Activated CD8-positive, alpha-beta T cell treated with anti-CD3 and anti-CD28 coated beads for 36 hours (primary cell): ENCODE measurements at regions of chrX and their contacts with region 1.

Region 1: GRCh38 chrX:54639346-54640102 is 109.5 kb downstream of the GNL3L start:
- DNase-seq: peak; percentile 98
- ATAC-seq: peak; percentile 94
- H3K4me3 Mint-ChIP-seq: peak overlapping the region; percentile 78
- H3K27ac Mint-ChIP-seq: peak overlapping the region; percentile 97
- H3K4me1 Mint-ChIP-seq: peaks cover 9% of the 10 kb centered on the region
- H3K27me3 Mint-ChIP-seq: no peaks in the 10 kb centered on the region
- CTCF ChIP-seq: peak; percentile 39

Region 2: DNA sequence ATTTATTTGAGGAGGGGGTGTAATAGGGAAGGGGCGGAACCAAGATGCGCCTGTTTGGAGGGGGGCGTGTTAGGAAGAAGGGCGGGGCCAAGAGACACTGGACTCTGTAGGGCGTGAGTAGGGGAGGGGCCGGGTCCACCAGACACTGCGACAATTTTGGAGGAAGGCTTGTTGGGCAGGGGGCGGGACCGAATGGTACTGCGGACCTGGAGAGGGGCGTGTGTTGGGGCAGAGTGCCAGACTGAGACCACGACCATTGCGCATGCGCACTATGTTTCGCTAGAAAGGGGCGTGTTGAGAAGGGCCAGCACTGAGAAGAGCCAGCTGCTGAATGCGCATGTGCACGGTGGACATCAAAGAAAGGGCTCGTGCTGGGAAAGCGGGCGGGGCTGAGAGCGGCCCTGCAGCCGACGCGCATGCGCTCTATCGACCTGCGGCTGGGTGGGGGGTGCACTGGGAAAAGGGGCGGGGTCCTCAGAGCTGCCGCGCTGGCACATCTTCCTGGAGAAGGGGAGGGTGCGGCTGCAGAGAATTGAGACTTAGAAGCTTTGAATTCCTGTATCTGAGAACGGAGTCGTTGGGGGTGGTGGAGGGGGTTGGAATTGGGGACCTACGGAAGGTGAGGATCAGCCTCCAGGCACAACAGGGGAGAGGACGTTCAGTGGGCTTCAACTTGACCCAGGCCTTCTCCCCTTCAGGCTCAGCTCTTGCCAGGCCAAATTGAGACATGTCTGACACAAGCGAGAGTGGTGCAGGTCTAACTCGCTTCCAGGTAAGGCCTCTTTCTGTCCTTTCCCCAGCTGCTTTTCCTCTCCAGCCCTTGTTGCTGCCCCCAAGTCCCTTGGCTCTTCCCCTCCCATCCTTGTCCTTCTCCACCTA is 169.3 kb after region 1 on chrX:
- CTCF ChIA-PET with region 1: interaction called, 3 read pairs
- POLR2A ChIA-PET with region 1: interaction called, 11 read pairs
- intact Hi-C with region 1: no loop called
- DNase-seq: peak; percentile 93
- ATAC-seq: peak; percentile 92
- H3K4me3 Mint-ChIP-seq: peak overlapping the region; percentile 89
- H3K27ac Mint-ChIP-seq: peak overlapping the region; percentile 94
- H3K4me1 Mint-ChIP-seq: peaks cover 9% of the 10 kb centered on the region
- H3K27me3 Mint-ChIP-seq: no peaks in the 10 kb centered on the region
- CTCF ChIP-seq: no peak

Region 3: DNA sequence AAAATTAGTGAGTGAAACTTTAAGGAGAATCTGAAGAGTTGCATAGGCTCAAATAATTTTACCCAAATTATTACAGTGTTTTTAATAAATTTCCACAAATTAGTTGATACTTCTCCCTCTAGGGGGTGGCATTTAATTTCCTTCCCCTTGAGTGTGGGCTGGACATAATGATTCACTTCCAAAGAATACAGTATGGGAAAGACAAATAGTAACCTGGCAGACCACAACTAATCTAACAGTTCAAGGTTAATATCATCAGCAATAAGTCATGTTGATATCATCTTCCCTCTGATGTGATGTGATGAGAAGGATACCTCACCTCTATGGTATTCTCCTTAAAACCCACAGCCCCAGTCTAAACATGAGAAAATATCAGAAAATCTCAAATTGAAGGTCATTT is 338.9 kb after region 1 on chrX:
- CTCF ChIA-PET with region 1: no interaction called
- POLR2A ChIA-PET with region 1: no interaction called
- intact Hi-C with region 1: no loop called
- DNase-seq: no peak
- ATAC-seq: no peak
- H3K4me3 Mint-ChIP-seq: no peak overlapping the region
- H3K27ac Mint-ChIP-seq: no peak overlapping the region
- H3K4me1 Mint-ChIP-seq: no peaks in the 10 kb centered on the region
- H3K27me3 Mint-ChIP-seq: no peaks in the 10 kb centered on the region
- CTCF ChIP-seq: no peak